Breast epithelium (tissue), 4 donors: ENCODE measurements at regions of chr10 and their contacts with region 1.

Region 1: GRCh38 chr10:9922126-9922870 is 1095.4 kb upstream of the CELF2 start:
- DNase-seq: no peak
- H3K4me3 ChIP-seq: no peak overlapping the region
- H3K27ac ChIP-seq: no peak overlapping the region
- H3K4me1 ChIP-seq: no peaks in the 10 kb centered on the region
- H3K27me3 ChIP-seq: no peaks in the 10 kb centered on the region
- CTCF ChIP-seq: no peak
- POLR2A ChIP-seq: no peak

Region 2: DNA sequence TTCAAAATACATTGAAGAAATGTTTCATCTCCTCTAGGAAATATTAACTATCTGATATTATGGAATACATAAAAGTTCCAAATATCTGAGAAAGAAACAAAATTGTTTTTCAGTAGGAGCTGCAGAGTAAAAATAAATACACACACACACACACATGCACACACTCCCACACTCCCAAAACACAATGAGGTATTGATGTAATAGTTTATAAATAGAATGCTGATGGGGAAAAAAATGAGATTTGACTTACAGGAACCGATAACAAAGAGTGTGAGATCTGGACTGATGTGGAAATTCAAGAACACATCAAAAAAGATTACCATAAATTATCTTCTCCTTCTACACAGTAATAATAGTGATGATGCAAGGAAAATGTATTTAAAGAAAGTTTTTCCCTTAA is 657.4 kb after region 1 on chr10:
- intact Hi-C with region 1: no loop called
- DNase-seq: no peak
- H3K4me3 ChIP-seq: no peak overlapping the region
- H3K27ac ChIP-seq: no peak overlapping the region
- H3K4me1 ChIP-seq: no peaks in the 10 kb centered on the region
- H3K27me3 ChIP-seq: no peaks in the 10 kb centered on the region
- CTCF ChIP-seq: no peak
- POLR2A ChIP-seq: no peak

Region 3: DNA sequence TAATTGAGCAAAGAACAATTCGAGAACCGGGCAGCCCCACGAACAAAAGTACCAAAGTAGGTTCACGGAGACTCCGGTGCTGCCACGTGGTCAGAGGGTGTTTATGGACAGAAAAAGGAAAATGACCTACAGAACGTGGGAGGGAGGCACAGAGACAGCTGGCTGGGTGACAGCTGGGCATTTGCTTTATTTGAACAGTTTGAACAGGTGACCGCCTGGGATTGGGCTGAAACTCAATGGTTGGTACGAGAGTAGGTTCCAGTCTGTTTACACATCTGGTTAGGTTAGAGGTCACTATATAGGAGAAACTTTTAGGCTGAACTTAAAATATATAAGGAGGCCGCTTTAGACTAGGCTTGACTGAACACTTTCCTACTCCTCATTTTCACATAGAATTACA is 1044.7 kb after region 1 on chr10:
- intact Hi-C with region 1: loop called (anchors 5 kb)
- DNase-seq: no peak
- H3K4me3 ChIP-seq: no peak overlapping the region
- H3K27ac ChIP-seq: no peak overlapping the region
- H3K4me1 ChIP-seq: no peaks in the 10 kb centered on the region
- H3K27me3 ChIP-seq: no peaks in the 10 kb centered on the region
- CTCF ChIP-seq: no peak
- POLR2A ChIP-seq: no peak